ENCODE measurements at regions of chr16 and their contacts with region 1.

Region 1: GRCh38 chr16:11356573-11357331 is 11.5 kb downstream of the RMI2 start:
- DNase-seq: no peak
- ATAC-seq: peak; percentile 42
- H3K4me3 ChIP-seq: no peak overlapping the region
- H3K27ac ChIP-seq: no peak overlapping the region
- H3K4me1 ChIP-seq: peaks cover 44% of the 10 kb centered on the region
- H3K27me3 ChIP-seq: no peaks in the 10 kb centered on the region
- CTCF ChIP-seq: peak; percentile 70 to 88 (median 74); a peak in 5 of 6 replicates
- EP300 ChIP-seq: no peak
- POLR2A ChIP-seq: no peak
- RAD21 ChIP-seq: peak; percentile 88

Region 2: GRCh38 chr16:10957771-10958486 is 398.8 kb before region 1 on chr16:
- CTCF ChIA-PET with region 1: interaction called, 40 read pairs
- POLR2A ChIA-PET with region 1: interaction called, 3 read pairs
- RAD21 ChIA-PET with region 1: interaction called, 34 read pairs
- SMC1A ChIA-PET with region 1: interaction called, 20 read pairs
- in situ Hi-C with region 1: no loop called
- intact Hi-C with region 1: no loop called
- DNase-seq: no peak
- ATAC-seq: peak; percentile 75
- H3K4me3 ChIP-seq: no peak overlapping the region
- H3K27ac ChIP-seq: peak overlapping the region; percentile 70
- H3K4me1 ChIP-seq: peaks cover 34% of the 10 kb centered on the region
- H3K27me3 ChIP-seq: no peaks in the 10 kb centered on the region
- CTCF ChIP-seq: no peak
- EP300 ChIP-seq: peak; percentile 30 to 47; a peak in 2 of 4 replicates
- POLR2A ChIP-seq: no peak
- RAD21 ChIP-seq: no peak

Region 3: DNA sequence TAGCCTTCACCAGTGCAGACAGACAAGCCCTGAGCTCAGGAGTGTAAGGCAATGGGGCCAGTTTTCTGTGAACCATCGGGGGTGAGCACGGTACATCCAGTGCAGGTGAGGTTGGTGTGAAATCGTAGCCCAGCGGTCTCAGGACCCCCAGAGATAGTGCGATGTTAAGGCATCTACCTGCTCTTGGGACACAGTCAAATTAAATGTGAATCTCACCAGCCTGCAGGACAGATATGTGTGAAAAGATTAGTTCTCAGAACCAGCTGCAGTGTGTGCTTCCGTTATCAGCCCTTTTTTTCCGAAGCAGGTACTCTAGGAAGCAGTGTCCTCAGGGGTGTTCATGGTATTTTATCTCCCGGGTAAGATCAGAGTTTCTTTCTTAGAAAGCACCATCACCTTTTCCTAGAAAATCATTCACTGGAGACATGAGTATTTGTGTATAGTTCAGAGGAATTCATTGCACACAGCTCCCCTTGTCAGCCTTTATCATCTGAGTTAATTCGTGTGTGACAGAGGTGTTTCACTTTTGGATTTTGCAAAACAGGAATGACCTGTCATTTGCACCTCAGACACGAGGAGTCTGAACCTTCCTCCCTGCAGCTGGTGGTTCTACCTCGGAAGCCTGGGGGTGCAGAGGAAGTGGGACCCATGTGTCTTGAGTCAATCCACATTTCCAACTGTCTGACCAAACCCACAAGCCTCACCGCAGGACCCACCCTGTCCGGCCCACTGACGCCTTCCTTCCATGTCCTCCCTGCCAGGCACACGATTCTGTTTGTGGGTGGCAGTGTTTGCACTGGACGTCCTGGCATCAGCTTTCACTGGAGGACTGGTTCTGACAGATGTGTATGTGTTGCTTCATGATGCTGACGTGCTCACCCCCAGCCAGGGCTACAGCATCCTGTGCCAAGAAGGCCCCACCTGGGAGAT is 304.6 kb before region 1 on chr16:
- CTCF ChIA-PET with region 1: no interaction called
- POLR2A ChIA-PET with region 1: interaction called, 16 read pairs
- RAD21 ChIA-PET with region 1: interaction called, 3 read pairs
- SMC1A ChIA-PET with region 1: no interaction called
- in situ Hi-C with region 1: no loop called
- intact Hi-C with region 1: no loop called
- DNase-seq: peak; percentile 61
- ATAC-seq: peak; percentile 81
- H3K4me3 ChIP-seq: no peak overlapping the region
- H3K27ac ChIP-seq: peak overlapping the region; percentile 18; the same call in 1 of the 2 replicates
- H3K4me1 ChIP-seq: peaks cover 25% of the 10 kb centered on the region
- H3K27me3 ChIP-seq: no peaks in the 10 kb centered on the region
- CTCF ChIP-seq: 0 out of 6 replicates have a peak, but pooled peaks of 1 of the 3 experiments have one; percentile 5
- EP300 ChIP-seq: no peak
- POLR2A ChIP-seq: no peak
- RAD21 ChIP-seq: 0 out of 2 replicates have a peak, but pooled peaks have one; percentile 9

Region 4: GRCh38 chr16:11181899-11182279 is 174.9 kb before region 1 on chr16:
- CTCF ChIA-PET with region 1: interaction called, 5 read pairs
- POLR2A ChIA-PET with region 1: interaction called, 6 read pairs
- RAD21 ChIA-PET with region 1: interaction called, 7 read pairs
- SMC1A ChIA-PET with region 1: interaction called, 5 read pairs
- in situ Hi-C with region 1: no loop called
- intact Hi-C with region 1: loop called (anchors 2 kb)
- DNase-seq: peak; percentile 64
- ATAC-seq: peak; percentile 37
- H3K4me3 ChIP-seq: no peak overlapping the region
- H3K27ac ChIP-seq: peak overlapping the region; percentile 81
- H3K4me1 ChIP-seq: peaks cover 47% of the 10 kb centered on the region
- H3K27me3 ChIP-seq: no peaks in the 10 kb centered on the region
- CTCF ChIP-seq: no peak
- EP300 ChIP-seq: peak in 1 of 2 experiments; percentile 70; a peak in 1 of 4 replicates
- POLR2A ChIP-seq: peak; percentile 15; the same call in 1 of the 2 replicates
- RAD21 ChIP-seq: no peak

Region 5: GRCh38 chr16:11312718-11313492 is 43.8 kb before region 1 on chr16:
- CTCF ChIA-PET with region 1: interaction called, 70 read pairs
- POLR2A ChIA-PET with region 1: interaction called, 13 read pairs
- RAD21 ChIA-PET with region 1: interaction called, 129 read pairs
- SMC1A ChIA-PET with region 1: interaction called, 66 read pairs
- in situ Hi-C with region 1: no loop called
- intact Hi-C with region 1: loop called (anchors 1 kb)
- DNase-seq: no peak
- ATAC-seq: no peak
- H3K4me3 ChIP-seq: no peak overlapping the region
- H3K27ac ChIP-seq: no peak overlapping the region; the same call in 1 of the 2 replicates
- H3K4me1 ChIP-seq: peaks cover 57% of the 10 kb centered on the region
- H3K27me3 ChIP-seq: no peaks in the 10 kb centered on the region; a peak in 1 of 4 replicates
- CTCF ChIP-seq: no peak
- EP300 ChIP-seq: no peak
- POLR2A ChIP-seq: no peak
- RAD21 ChIP-seq: no peak

Region 6: DNA sequence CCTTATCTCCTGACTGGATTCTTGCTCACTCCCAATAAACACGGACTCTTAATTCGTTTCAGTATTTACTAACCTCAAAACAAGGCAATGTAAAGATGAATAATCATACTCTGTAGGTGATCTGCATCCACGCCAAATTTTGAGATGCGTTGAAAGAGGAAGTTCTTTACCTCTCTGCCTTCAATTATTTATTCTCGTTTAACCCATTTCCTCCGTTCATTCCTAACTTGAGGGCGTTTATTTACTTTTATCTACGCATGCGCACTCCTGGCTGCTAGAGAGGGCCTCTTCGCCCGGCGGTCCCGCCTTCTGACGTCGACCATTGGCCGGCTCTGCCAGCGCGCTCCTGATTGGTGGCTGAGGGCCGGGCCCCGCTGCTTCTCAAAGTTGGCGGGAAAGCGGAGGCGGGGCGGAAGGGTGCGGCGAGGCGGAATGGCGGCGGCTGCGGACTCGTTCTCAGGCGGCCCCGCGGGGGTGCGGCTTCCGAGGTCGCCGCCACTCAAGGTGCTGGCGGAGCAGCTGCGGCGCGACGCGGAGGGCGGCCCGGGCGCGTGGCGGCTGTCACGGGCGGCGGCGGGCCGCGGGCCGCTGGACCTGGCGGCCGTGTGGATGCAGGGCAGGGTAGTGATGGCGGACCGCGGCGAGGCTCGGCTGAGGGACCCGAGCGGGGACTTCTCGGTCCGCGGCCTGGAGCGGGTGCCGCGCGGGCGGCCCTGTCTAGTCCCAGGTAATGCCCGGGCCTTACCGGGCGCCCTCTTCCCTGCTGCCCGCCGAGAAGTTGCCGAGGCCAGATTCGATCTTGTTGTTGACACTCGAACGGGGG is 11.5 kb before region 1 on chr16 and contains the start of gene RMI2:
- CTCF ChIA-PET with region 1: interaction called, 10 read pairs
- POLR2A ChIA-PET with region 1: interaction called, 9 read pairs
- RAD21 ChIA-PET with region 1: interaction called, 5 read pairs
- SMC1A ChIA-PET with region 1: interaction called, 12 read pairs
- in situ Hi-C with region 1: no loop called
- intact Hi-C with region 1: no loop called
- DNase-seq: peak; percentile 77
- ATAC-seq: peak; percentile 99
- H3K4me3 ChIP-seq: peak within 1 kb of the TSS; percentile 68
- H3K27ac ChIP-seq: peak within 1 kb of the TSS; percentile 57
- H3K4me1 ChIP-seq: peaks cover 6% of the 10 kb centered on the region
- H3K27me3 ChIP-seq: no peaks in the 10 kb centered on the region
- CTCF ChIP-seq: no peak
- EP300 ChIP-seq: no peak
- POLR2A ChIP-seq: peak; percentile 88
- RAD21 ChIP-seq: no peak
- polyA plus RNA-seq, gene RMI2: 9.6 to 21.7 TPM

Region 7: DNA sequence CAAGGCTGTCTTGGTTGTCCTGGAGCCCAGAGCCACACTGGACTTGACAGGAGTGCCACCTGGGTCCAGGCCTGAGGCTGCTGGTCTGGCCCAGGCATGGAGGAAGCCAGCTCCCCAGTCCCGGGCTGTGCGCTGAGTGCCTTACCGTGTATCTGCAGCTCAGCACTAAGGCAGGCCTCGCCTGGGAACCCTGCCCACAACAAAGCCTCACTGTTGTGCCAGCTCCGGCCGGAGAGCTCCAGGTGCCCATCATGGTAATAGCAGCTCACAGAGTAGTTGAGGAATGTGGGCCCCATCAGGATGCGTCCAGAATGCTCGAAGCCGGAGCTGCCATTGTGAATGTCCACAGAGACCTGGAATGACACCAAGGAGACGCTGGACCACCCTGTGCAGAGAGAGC is 60.7 kb after region 1 on chr16:
- CTCF ChIA-PET with region 1: no interaction called
- POLR2A ChIA-PET with region 1: no interaction called
- RAD21 ChIA-PET with region 1: no interaction called
- SMC1A ChIA-PET with region 1: no interaction called
- in situ Hi-C with region 1: no loop called
- intact Hi-C with region 1: no loop called
- DNase-seq: no peak
- ATAC-seq: no peak
- H3K4me3 ChIP-seq: no peak overlapping the region
- H3K27ac ChIP-seq: no peak overlapping the region
- H3K4me1 ChIP-seq: no peaks in the 10 kb centered on the region; the same call in 1 of the 2 replicates
- H3K27me3 ChIP-seq: no peaks in the 10 kb centered on the region
- CTCF ChIP-seq: no peak
- EP300 ChIP-seq: no peak
- POLR2A ChIP-seq: no peak
- RAD21 ChIP-seq: no peak

Region 8: DNA sequence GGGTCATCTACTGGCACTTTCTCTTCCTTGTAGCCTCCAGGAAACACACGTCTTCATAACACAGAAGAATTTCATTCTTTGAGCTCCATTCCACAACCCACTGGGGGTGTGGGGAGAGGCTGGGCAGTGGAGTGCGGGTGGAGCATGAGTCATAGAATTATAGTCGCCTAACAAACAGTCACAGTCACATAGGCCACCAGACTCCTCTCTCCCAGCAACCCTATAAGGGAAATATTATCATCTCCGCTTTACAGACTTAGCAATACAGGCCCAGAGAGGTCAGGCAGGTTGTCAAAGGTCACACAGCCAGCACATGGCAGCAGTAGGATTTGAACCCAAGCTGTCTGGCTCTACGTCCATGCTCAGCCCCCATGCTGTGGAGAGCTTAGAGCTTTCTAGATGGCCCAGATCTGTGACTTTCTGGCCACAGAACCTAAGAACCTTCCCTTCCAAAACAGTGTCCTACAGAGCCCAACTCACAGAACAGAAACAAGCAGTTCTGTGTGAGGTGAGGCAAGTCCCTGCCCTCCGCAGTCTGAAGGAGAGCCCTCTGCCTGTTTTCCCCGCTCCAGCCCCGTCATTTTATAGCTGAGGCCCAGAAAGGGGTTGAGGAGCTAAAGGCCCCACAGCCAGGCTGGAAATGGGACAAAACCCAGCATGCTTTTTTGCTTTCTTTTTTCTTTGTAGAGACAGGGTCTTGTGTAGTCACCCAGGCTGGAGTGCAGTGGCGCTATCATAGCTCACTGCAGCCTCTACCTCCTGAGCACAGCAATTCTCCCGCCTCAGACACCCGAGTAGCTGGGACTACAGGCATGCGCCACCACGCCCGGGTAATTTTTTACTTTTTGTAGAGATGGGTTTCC is 240.7 kb after region 1 on chr16:
- CTCF ChIA-PET with region 1: no interaction called
- POLR2A ChIA-PET with region 1: no interaction called
- RAD21 ChIA-PET with region 1: no interaction called
- SMC1A ChIA-PET with region 1: no interaction called
- in situ Hi-C with region 1: no loop called
- intact Hi-C with region 1: no loop called
- DNase-seq: no peak
- ATAC-seq: no peak
- H3K4me3 ChIP-seq: no peak overlapping the region
- H3K27ac ChIP-seq: no peak overlapping the region
- H3K4me1 ChIP-seq: no peaks in the 10 kb centered on the region
- H3K27me3 ChIP-seq: no peaks in the 10 kb centered on the region
- CTCF ChIP-seq: no peak
- EP300 ChIP-seq: no peak
- POLR2A ChIP-seq: no peak
- RAD21 ChIP-seq: no peak